ENCODE measurements at regions of chr9 and their contacts with region 1.

Region 1: GRCh38 chr9:8717146-8717545 is 917.6 kb upstream of the DMAC1 start:
- DNase-seq: no peak
- H3K4me3 ChIP-seq: no peak overlapping the region
- H3K4me3 Mint-ChIP-seq: no peak overlapping the region
- H3K27ac ChIP-seq: no peak overlapping the region
- H3K27ac Mint-ChIP-seq: no peak overlapping the region
- H3K4me1 ChIP-seq: no peaks in the 10 kb centered on the region
- H3K4me1 Mint-ChIP-seq: peaks cover 0 to 9% (median under 1%) of the 10 kb centered on the region in 4 donors
- H3K27me3 ChIP-seq: no peaks in the 10 kb centered on the region
- H3K27me3 Mint-ChIP-seq: no peaks in the 10 kb centered on the region

Region 2: GRCh38 chr9:8660383-8660782 is 56.8 kb before region 1 on chr9:
- CTCF ChIA-PET with region 1: no interaction called
- POLR2A ChIA-PET with region 1: no interaction called
- intact Hi-C with region 1: no loop called
- DNase-seq: no peak
- H3K4me3 ChIP-seq: no peak overlapping the region
- H3K4me3 Mint-ChIP-seq: no peak overlapping the region
- H3K27ac ChIP-seq: no peak overlapping the region
- H3K27ac Mint-ChIP-seq: peak overlapping the region in 1 of 7 donors; percentile 25
- H3K4me1 ChIP-seq: no peaks in the 10 kb centered on the region
- H3K4me1 Mint-ChIP-seq: no peaks in the 10 kb centered on the region
- H3K27me3 ChIP-seq: no peaks in the 10 kb centered on the region
- H3K27me3 Mint-ChIP-seq: peaks cover 0 to 2% of the 10 kb centered on the region in 2 donors

Region 3: GRCh38 chr9:8705861-8706260 is 11.3 kb before region 1 on chr9:
- CTCF ChIA-PET with region 1: no interaction called
- POLR2A ChIA-PET with region 1: no interaction called
- intact Hi-C with region 1: loop called (anchors 1 kb)
- DNase-seq: no peak
- H3K4me3 ChIP-seq: no peak overlapping the region
- H3K4me3 Mint-ChIP-seq: no peak overlapping the region
- H3K27ac ChIP-seq: no peak overlapping the region
- H3K27ac Mint-ChIP-seq: no peak overlapping the region
- H3K4me1 ChIP-seq: no peaks in the 10 kb centered on the region
- H3K4me1 Mint-ChIP-seq: no peaks in the 10 kb centered on the region
- H3K27me3 ChIP-seq: no peaks in the 10 kb centered on the region
- H3K27me3 Mint-ChIP-seq: peaks cover 2 to 5% of the 10 kb centered on the region in 2 donors

Measured in CD4-positive, alpha-beta memory T cell (primary cell).